PC-9 (cell line): ENCODE measurements at regions of chr18 and their contacts with region 1.

Region 1: DNA sequence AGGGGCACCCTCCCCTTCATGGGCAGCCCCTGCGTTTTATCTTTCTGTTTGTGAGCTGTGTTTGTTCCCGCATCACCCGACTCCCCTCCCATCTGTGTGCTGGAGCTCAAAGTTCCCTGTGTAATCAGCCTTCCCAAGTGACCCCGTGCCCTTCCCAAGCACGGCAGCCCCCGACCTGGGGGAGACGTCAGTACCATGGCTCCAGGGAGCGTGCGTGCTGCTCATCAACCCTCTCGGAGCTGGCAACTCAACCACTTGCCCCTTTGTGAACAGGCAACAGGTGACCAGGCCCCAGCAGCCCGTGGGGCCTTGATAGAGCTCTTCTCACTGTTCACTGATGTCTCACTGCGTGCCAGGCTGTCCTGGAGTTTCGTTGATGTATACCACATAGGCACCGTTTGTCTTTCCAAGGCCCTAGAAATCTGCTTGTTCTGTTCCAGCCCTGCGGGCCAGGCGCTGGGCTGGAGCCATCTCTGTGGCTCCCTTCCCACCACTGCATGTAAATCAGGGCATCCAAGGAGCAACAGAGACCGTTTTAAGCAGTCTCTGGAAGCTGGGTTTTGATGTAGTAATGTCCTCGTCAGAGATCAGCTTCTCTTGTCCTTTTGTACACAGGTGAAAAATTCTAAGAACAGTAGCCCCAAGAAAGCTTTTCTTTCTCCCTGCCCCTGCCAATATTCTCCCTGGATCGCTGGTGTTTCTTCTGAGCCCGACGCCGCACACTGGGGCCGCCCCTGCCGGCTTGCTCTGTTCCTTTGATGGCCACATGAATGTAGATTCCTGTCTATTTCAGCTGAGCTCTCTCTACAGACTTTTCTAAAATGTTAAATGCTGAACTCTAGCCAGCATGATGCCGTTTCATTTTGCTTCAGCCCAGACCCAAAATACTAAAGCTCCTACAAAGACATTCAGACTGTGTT is 107.0 kb upstream of the PTPRM start:
- DNase-seq: no peak
- H3K4me3 ChIP-seq: no peak overlapping the region
- H3K27ac ChIP-seq: no peak overlapping the region
- H3K4me1 ChIP-seq: no peaks in the 10 kb centered on the region
- H3K27me3 ChIP-seq: peaks cover 92% of the 10 kb centered on the region
- CTCF ChIP-seq: no peak

Region 2: GRCh38 chr18:5914951-5915350 is 1545.2 kb before region 1 on chr18:
- CTCF ChIA-PET with region 1: no interaction called
- POLR2A ChIA-PET with region 1: no interaction called
- intact Hi-C with region 1: no loop called
- DNase-seq: no peak
- H3K4me3 ChIP-seq: no peak overlapping the region
- H3K27ac ChIP-seq: no peak overlapping the region
- H3K4me1 ChIP-seq: no peaks in the 10 kb centered on the region
- H3K27me3 ChIP-seq: peaks cover 35% of the 10 kb centered on the region
- CTCF ChIP-seq: no peak

Region 3: DNA sequence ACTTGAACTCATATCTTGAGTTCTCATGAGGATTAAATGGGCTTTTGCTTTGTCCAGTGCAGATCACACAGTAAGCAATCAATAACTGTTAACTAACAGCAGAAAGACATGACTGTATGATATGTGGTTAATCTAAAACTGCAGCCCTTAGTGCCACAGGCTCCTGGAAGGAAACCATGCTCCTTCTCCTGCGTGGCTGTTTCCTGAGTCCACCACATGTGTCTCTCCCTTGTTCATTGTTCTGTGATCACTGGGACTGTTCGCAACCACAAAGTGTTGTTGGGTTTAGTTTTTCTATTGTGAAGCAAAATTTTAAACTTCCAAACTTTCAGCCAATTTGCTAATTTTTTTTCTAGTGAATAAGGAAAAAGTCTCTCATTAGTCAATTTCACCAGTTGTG is 23.9 kb before region 1 on chr18:
- CTCF ChIA-PET with region 1: no interaction called
- POLR2A ChIA-PET with region 1: interaction called, 15 read pairs
- intact Hi-C with region 1: no loop called
- DNase-seq: no peak
- H3K4me3 ChIP-seq: no peak overlapping the region
- H3K27ac ChIP-seq: no peak overlapping the region
- H3K4me1 ChIP-seq: no peaks in the 10 kb centered on the region
- H3K27me3 ChIP-seq: peaks cover 22% of the 10 kb centered on the region
- CTCF ChIP-seq: no peak

Region 4: DNA sequence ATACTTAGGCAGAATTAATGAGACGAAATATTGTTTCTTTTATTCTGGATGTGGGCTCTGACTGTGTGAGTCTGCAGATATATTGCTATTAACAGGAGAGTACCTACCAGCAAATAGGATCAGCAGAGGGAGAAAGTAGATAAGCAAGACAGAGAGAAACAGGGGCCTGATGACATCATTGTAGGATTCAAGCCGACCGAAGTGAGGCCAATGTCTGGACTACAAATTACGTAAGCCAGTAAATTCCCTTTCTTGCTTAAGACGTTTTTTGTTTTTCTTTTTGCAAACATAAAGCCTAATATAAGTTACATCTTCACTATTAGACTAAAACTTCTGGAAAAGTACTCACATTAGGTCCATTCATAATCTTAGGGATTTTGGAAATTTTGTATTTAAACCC is 85.6 kb after region 1 on chr18:
- CTCF ChIA-PET with region 1: no interaction called
- POLR2A ChIA-PET with region 1: no interaction called
- intact Hi-C with region 1: loop called (anchors 10 kb)
- DNase-seq: no peak
- H3K4me3 ChIP-seq: no peak overlapping the region
- H3K27ac ChIP-seq: no peak overlapping the region
- H3K4me1 ChIP-seq: no peaks in the 10 kb centered on the region
- H3K27me3 ChIP-seq: no peaks in the 10 kb centered on the region
- CTCF ChIP-seq: no peak